ENCODE measurements at regions of chr14 and their contacts with region 1.

Region 1: GRCh38 chr14:77760381-77761246 is at the start of gene SNW1:
- DNase-seq: peak; percentile 80 to 94 (median 90)
- ATAC-seq: peak; percentile 95
- H3K4me3 ChIP-seq: peak within 1 kb of the TSS; percentile 94
- H3K4me3 Mint-ChIP-seq: peak within 1 kb of the TSS; percentile 91 to 97 (median 95)
- H3K27ac ChIP-seq: peak within 1 kb of the TSS; percentile 97
- H3K27ac Mint-ChIP-seq: peak within 1 kb of the TSS; percentile 92 to 99 (median 98)
- H3K4me1 ChIP-seq: peaks cover 28 to 30% of the 10 kb centered on the region in 2 donors
- H3K4me1 Mint-ChIP-seq: peaks cover 26 to 60% (median 42%) of the 10 kb centered on the region in 7 donors
- H3K27me3 ChIP-seq: no peaks in the 10 kb centered on the region
- H3K27me3 Mint-ChIP-seq: no peaks in the 10 kb centered on the region
- total RNA-seq, gene SNW1: 84.4 to 108 (median 97.7) TPM

Region 2: DNA sequence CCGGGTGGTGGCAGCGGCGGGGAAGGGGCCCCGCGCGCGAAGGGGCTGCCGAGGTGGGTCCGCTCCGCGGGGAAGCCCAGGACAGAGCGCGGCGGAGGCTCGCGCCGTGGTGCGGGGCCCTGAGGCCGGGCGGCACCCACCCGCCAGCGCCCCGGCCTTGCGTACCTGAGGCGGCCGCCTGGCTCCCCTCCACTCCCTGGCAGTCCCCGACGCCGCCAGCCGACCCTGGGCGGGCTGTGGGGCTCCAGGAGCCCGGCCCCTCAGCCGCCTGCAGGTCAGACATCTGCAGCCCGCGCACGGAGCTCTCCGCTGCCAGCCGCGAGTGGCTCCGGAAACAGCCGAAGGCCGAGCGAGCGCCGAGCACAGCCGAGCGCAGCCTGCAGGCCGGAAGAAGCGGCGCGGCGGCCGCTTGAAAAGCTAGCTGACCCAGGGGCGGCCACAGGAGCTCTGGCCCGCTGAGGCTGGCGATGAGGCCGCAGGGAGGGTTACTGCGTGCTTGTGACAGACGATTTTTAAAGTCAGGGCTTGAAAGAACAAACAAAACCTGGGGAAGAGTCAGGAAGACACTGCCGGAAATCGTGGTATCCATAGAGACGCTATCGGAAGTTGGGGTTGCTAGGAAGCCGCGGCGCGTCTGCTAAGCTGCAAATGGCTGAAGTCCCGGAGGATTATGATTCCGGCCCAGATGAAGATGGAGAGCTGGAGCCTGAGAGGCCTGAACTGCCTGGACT is 383.7 kb before region 1 on chr14 and contains the starts of genes SAMD15 and TMED8:
- CTCF ChIA-PET with region 1: no interaction called
- POLR2A ChIA-PET with region 1: interaction called, 4 read pairs
- intact Hi-C with region 1: loop called in 1 of 2 experiments (anchors 1 kb)
- DNase-seq: peak; percentile 77 to 88 (median 83)
- ATAC-seq: peak; percentile 96
- H3K4me3 ChIP-seq: peak within 1 kb of the TSS; percentile 99
- H3K4me3 Mint-ChIP-seq: peak within 1 kb of the TSS in 7 of 10 donors; percentile 88 to 97 (median 93)
- H3K27ac ChIP-seq: peak within 1 kb of the TSS; percentile 87
- H3K27ac Mint-ChIP-seq: peak within 1 kb of the TSS; percentile 52 to 93 (median 77)
- H3K4me1 ChIP-seq: peaks cover 14 to 18% of the 10 kb centered on the region in 2 donors
- H3K4me1 Mint-ChIP-seq: peaks cover 17 to 41% (median 39%) of the 10 kb centered on the region in 7 donors
- H3K27me3 ChIP-seq: no peaks in the 10 kb centered on the region
- H3K27me3 Mint-ChIP-seq: peaks cover 0 to 10% (median 0%) of the 10 kb centered on the region in 5 donors
- total RNA-seq, gene SAMD15: 0.27 to 0.46 (median 0.42) TPM in 3 of 5 experiments, not detected in the others
- total RNA-seq, gene TMED8: 5.5 to 18.6 (median 7.0) TPM

Region 3: GRCh38 chr14:77565289-77565993 is 195.2 kb before region 1 on chr14:
- CTCF ChIA-PET with region 1: no interaction called
- POLR2A ChIA-PET with region 1: no interaction called
- intact Hi-C with region 1: no loop called
- DNase-seq: no peak
- ATAC-seq: peak; percentile 73
- H3K4me3 ChIP-seq: no peak overlapping the region
- H3K4me3 Mint-ChIP-seq: no peak overlapping the region
- H3K27ac ChIP-seq: no peak overlapping the region
- H3K27ac Mint-ChIP-seq: peak overlapping the region in 2 of 9 donors; percentile 12 to 69
- H3K4me1 ChIP-seq: no peaks in the 10 kb centered on the region
- H3K4me1 Mint-ChIP-seq: peaks cover 0 to 10% (median 5%) of the 10 kb centered on the region in 7 donors
- H3K27me3 ChIP-seq: no peaks in the 10 kb centered on the region
- H3K27me3 Mint-ChIP-seq: no peaks in the 10 kb centered on the region

Region 4: GRCh38 chr14:77641534-77642341 is 118.9 kb before region 1 on chr14:
- CTCF ChIA-PET with region 1: no interaction called
- POLR2A ChIA-PET with region 1: no interaction called
- intact Hi-C with region 1: loop called in 1 of 2 experiments (anchors 1 kb)
- DNase-seq: peak; percentile 33 to 68 (median 59)
- ATAC-seq: peak; percentile 80
- H3K4me3 ChIP-seq: peak overlapping the region; percentile 84
- H3K4me3 Mint-ChIP-seq: peak overlapping the region; percentile 84 to 95 (median 92)
- H3K27ac ChIP-seq: peak overlapping the region; percentile 70
- H3K27ac Mint-ChIP-seq: peak overlapping the region; percentile 90 to 97 (median 92)
- H3K4me1 ChIP-seq: peaks cover 8% of the 10 kb centered on the region in 2 donors
- H3K4me1 Mint-ChIP-seq: peaks cover 0 to 19% (median 16%) of the 10 kb centered on the region in 7 donors
- H3K27me3 ChIP-seq: no peaks in the 10 kb centered on the region
- H3K27me3 Mint-ChIP-seq: peaks cover 0 to 3% (median 0%) of the 10 kb centered on the region in 5 donors

Region 5: GRCh38 chr14:77721437-77721836 is 39.2 kb before region 1 on chr14:
- CTCF ChIA-PET with region 1: no interaction called
- POLR2A ChIA-PET with region 1: no interaction called
- intact Hi-C with region 1: loop called in 1 of 2 experiments (anchors 5 kb)
- DNase-seq: no peak
- ATAC-seq: no peak
- H3K4me3 ChIP-seq: no peak overlapping the region
- H3K4me3 Mint-ChIP-seq: no peak overlapping the region
- H3K27ac ChIP-seq: no peak overlapping the region
- H3K27ac Mint-ChIP-seq: peak overlapping the region in 1 of 9 donors; percentile 38
- H3K4me1 ChIP-seq: no peaks in the 10 kb centered on the region
- H3K4me1 Mint-ChIP-seq: peaks cover 0 to 6% (median 0%) of the 10 kb centered on the region in 7 donors
- H3K27me3 ChIP-seq: no peaks in the 10 kb centered on the region
- H3K27me3 Mint-ChIP-seq: no peaks in the 10 kb centered on the region

Region 6: DNA sequence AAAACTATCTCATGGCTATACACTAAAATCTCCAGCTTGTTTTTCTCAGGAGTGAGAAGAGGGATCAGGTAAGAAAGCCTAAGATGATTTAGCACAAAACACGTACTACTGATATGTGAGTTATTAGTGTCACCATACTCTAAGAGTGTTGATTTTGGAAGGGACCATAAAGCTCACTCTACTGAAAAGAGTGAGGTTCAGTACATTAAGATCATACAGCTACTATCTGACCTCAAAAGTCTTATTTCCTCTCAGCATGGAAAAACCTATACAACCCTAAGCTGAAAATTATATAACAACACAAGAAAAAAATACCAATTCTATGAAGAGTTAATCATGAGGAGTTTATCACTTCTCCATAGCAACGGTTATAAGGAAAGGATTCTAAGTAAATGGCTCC is 19.2 kb before region 1 on chr14:
- CTCF ChIA-PET with region 1: no interaction called
- POLR2A ChIA-PET with region 1: no interaction called
- intact Hi-C with region 1: loop called in 1 of 2 experiments (anchors 2 kb)
- DNase-seq: no peak
- ATAC-seq: no peak
- H3K4me3 ChIP-seq: no peak overlapping the region
- H3K4me3 Mint-ChIP-seq: no peak overlapping the region
- H3K27ac ChIP-seq: no peak overlapping the region
- H3K27ac Mint-ChIP-seq: peak overlapping the region in 5 of 9 donors; percentile 13 to 32 (median 14)
- H3K4me1 ChIP-seq: peaks cover 0 to 9% of the 10 kb centered on the region in 2 donors
- H3K4me1 Mint-ChIP-seq: peaks cover 15 to 44% (median 37%) of the 10 kb centered on the region in 7 donors
- H3K27me3 ChIP-seq: no peaks in the 10 kb centered on the region
- H3K27me3 Mint-ChIP-seq: no peaks in the 10 kb centered on the region

Region 7: GRCh38 chr14:77799863-77800730 is 39.5 kb after region 1 on chr14 and contains the start of gene ADCK1:
- CTCF ChIA-PET with region 1: interaction called, 5 read pairs
- POLR2A ChIA-PET with region 1: interaction called, 13 read pairs
- intact Hi-C with region 1: loop called (anchors 1 kb)
- DNase-seq: peak; percentile 74 to 87 (median 84)
- ATAC-seq: peak; percentile 94
- H3K4me3 ChIP-seq: peak within 1 kb of the TSS; percentile 71
- H3K4me3 Mint-ChIP-seq: peak within 1 kb of the TSS; percentile 83 to 89 (median 87)
- H3K27ac ChIP-seq: peak within 1 kb of the TSS; percentile 81
- H3K27ac Mint-ChIP-seq: peak within 1 kb of the TSS; percentile 34 to 92 (median 78)
- H3K4me1 ChIP-seq: no peaks in the 10 kb centered on the region
- H3K4me1 Mint-ChIP-seq: peaks cover 0 to 17% (median 6%) of the 10 kb centered on the region in 7 donors
- H3K27me3 ChIP-seq: no peaks in the 10 kb centered on the region
- H3K27me3 Mint-ChIP-seq: no peaks in the 10 kb centered on the region
- total RNA-seq, gene ADCK1: 4.5 to 10.6 (median 10.3) TPM